HCT116 (cell line): ENCODE measurements at regions of chr14 and their contacts with region 1.

Region 1: DNA sequence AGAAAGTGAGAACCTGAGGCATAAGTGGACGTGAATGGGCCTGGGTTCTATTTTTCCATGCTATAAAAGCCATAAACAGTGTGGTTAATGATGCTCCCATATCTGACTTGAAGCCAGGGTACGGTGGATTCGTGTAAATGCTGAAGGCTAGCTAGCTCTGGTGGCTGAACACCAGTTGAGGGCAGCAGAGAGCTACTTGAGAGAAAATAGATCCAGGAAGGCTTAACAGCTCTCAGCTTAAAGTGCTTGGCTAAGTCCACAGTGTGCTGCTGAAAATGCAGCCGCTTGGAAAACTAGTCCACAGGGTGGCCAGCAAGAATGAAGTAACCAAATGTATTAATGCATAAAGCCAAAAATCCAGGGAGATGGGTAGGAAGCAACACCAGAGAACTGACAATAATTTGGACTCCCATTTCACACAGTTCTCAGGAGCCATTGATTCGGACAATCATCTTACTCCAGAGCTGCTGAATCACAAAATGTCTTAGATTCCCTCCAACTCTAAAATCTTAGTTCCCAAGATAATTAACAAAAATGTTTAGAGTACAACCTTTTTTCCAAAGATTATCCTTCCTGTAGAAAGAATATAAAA is 15.0 kb upstream of the FOXG1 start:
- DNase-seq: peak; percentile 7
- ATAC-seq: no peak
- H3K4me3 ChIP-seq: no peak overlapping the region
- H3K27ac ChIP-seq: no peak overlapping the region
- H3K4me1 ChIP-seq: no peaks in the 10 kb centered on the region
- H3K27me3 ChIP-seq: no peaks in the 10 kb centered on the region
- CTCF ChIP-seq: peak in 2 of 3 experiments; percentile 31 to 43; a peak in 2 of 6 replicates
- POLR2A ChIP-seq: no peak
- RAD21 ChIP-seq: no peak

Region 2: GRCh38 chr14:28999656-29000055 is 248.1 kb after region 1 on chr14:
- CTCF ChIA-PET with region 1: no interaction called
- POLR2A ChIA-PET with region 1: no interaction called
- RAD21 ChIA-PET with region 1: no interaction called
- intact Hi-C with region 1: no loop called
- DNase-seq: no peak
- ATAC-seq: no peak
- H3K4me3 ChIP-seq: no peak overlapping the region
- H3K27ac ChIP-seq: no peak overlapping the region
- H3K4me1 ChIP-seq: no peaks in the 10 kb centered on the region
- H3K27me3 ChIP-seq: no peaks in the 10 kb centered on the region
- CTCF ChIP-seq: no peak
- POLR2A ChIP-seq: no peak
- RAD21 ChIP-seq: no peak

Region 3: DNA sequence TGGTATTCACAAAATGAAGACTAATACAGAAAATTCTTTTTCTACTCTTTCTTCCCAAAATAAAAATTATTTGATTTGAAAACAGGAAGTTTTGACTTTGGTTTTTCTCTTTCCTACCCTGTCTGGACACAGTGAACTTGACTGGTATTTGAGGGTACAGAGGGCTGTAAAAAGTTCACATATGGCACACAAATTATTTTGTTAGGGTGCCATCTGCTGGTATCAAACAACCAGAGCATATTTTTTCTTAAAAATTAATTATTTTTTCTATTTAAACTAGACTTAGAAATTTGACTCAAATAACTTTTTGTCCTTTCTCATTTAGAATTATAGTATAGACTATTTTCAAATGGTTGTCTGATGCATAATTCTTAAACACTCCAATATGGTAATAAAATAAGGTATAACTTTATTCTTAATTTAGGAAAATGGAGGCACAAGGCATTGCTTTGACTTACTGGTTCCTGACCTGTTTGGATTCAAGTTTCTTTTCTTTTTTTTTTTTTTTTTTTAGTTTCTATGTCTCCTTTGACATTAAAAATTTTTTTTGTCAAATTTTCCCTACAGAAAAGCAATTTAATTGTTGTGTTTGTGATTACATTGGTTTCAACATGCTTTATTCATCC is 785.4 kb after region 1 on chr14:
- CTCF ChIA-PET with region 1: no interaction called
- POLR2A ChIA-PET with region 1: no interaction called
- RAD21 ChIA-PET with region 1: no interaction called
- intact Hi-C with region 1: loop called (anchors 2 kb)
- DNase-seq: no peak
- ATAC-seq: no peak
- H3K4me3 ChIP-seq: no peak overlapping the region
- H3K27ac ChIP-seq: no peak overlapping the region
- H3K4me1 ChIP-seq: no peaks in the 10 kb centered on the region
- H3K27me3 ChIP-seq: no peaks in the 10 kb centered on the region
- CTCF ChIP-seq: peak in 1 of 3 experiments; percentile 21; a peak in 2 of 6 replicates
- POLR2A ChIP-seq: no peak
- RAD21 ChIP-seq: no peak

Region 4: DNA sequence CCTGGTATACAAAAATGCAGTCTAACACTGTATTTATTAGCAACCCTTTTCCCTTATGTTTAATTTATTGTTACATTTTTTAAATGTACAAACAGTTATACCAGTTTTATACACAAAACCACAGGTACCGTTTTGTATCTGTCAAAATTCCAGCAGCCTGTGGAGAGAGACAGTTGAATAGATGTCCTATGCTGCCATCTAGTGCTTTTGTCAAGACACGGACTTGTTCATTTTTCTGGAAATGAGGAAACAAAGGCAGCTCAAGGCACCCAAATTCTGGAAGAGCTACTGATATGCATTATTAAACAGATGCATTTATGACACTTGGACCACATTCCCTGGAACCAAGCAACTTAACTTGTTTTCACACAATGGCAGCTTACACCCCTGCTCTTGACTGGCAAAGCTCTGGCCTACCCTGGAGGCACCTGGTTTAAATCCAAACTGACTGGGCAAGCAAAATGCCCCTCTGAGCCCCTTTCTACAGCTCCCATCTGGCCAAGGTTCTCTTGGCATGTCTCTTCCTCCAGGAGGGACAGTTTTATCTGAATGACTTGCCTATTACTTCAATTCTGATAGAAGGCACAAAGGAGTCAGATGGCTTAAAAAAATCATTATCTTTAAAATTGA is 1463.0 kb after region 1 on chr14:
- CTCF ChIA-PET with region 1: no interaction called
- POLR2A ChIA-PET with region 1: no interaction called
- RAD21 ChIA-PET with region 1: no interaction called
- intact Hi-C with region 1: loop called (anchors 5 kb)
- DNase-seq: peak; percentile 8
- ATAC-seq: no peak
- H3K4me3 ChIP-seq: no peak overlapping the region
- H3K27ac ChIP-seq: no peak overlapping the region
- H3K4me1 ChIP-seq: no peaks in the 10 kb centered on the region
- H3K27me3 ChIP-seq: no peaks in the 10 kb centered on the region
- CTCF ChIP-seq: peak in 2 of 3 experiments; percentile 38 to 57; a peak in 4 of 6 replicates
- POLR2A ChIP-seq: no peak
- RAD21 ChIP-seq: peak; percentile 38; the same call in 1 of the 2 replicates

Region 5: DNA sequence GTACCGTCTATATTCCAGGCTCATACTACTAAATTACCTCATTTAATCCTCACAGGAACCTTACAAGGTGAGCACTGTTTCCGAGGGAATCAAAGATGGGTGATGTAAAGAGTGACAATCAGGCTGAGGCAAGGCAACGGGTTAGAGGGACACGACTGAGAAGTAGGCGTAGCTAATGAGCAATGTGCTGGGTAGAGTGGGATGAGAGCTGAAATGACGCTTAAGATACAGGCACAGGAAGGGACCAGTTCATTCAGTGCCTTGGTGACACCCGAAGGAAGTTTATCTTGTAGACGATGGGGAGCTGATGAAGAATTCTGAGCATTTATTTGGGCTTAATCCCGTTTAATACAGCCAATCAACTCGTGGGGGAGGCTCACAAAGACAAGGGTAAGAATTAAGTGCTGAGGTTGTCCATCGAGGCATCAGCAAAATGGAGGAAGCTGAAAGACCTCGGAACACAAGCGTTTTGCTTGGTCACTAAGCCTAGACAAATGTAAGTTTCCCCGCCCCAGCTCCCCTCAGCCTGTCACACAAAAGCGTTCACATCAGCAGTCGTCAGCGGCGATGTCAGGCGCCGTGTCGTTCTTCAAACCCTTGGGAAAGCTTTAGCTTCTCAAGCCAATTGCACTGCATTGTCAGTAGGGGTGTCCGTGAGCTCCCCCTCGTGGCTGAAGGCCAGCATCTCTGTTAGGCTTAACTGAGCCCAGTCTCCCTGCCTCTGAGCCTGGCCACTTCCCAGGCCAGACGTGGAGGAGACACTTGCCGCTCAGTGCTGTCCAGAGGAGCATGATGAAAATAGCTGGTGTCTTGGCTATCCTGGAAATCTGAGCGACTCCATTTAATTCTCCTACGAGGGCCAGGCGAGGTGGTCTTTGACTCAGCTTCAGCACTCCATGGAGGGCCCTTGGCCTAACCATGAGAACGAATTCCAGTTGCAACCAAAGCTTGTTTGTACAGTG is 1518.9 kb after region 1 on chr14:
- CTCF ChIA-PET with region 1: no interaction called
- POLR2A ChIA-PET with region 1: no interaction called
- RAD21 ChIA-PET with region 1: no interaction called
- intact Hi-C with region 1: loop called (anchors 2 kb)
- DNase-seq: peak; percentile 55
- ATAC-seq: peak; percentile 99
- H3K4me3 ChIP-seq: no peak overlapping the region
- H3K27ac ChIP-seq: no peak overlapping the region
- H3K4me1 ChIP-seq: no peaks in the 10 kb centered on the region
- H3K27me3 ChIP-seq: no peaks in the 10 kb centered on the region
- CTCF ChIP-seq: peak in 2 of 3 experiments; percentile 85 to 93; a peak in 4 of 6 replicates
- POLR2A ChIP-seq: no peak
- RAD21 ChIP-seq: peak; percentile 34; the same call in 1 of the 2 replicates

Region 6: DNA sequence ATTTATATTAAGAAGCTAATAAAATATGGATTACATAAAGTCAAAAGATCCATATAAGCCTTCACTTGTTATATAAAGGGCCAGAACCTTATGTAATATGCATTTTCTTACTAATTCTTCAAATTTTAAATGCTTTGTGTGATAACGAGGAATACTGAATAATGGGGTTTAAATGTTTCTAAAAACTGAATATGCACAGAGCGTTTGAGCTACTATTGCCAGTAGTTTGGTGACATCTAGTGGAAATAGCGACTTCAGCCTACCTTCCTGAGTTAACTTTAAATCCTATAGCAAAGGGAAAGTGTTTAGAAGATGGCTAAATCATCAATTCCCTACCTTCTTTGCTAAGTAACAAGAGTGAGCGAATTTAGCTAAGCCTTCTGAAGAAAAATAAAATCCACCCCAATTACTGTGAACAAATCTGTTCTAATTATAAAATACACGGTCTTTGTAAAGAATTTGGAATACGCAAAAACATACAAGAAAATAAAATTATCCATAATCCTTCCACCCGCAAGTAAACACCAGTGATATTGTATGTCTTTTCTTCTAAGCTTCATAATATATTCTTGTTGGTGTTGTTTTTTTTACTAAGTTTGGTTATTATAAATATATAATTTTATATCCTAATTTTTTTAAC is 1691.9 kb after region 1 on chr14:
- CTCF ChIA-PET with region 1: no interaction called
- POLR2A ChIA-PET with region 1: no interaction called
- RAD21 ChIA-PET with region 1: no interaction called
- intact Hi-C with region 1: loop called (anchors 5 kb)
- DNase-seq: peak; percentile 16
- ATAC-seq: 0 out of 2 replicates have a peak, but pooled peaks have one; percentile 53
- H3K4me3 ChIP-seq: no peak overlapping the region
- H3K27ac ChIP-seq: no peak overlapping the region
- H3K4me1 ChIP-seq: no peaks in the 10 kb centered on the region
- H3K27me3 ChIP-seq: peaks cover 34% of the 10 kb centered on the region
- CTCF ChIP-seq: peak; percentile 25 to 66 (median 48); a peak in 5 of 6 replicates
- POLR2A ChIP-seq: no peak
- RAD21 ChIP-seq: peak; percentile 63